K562 (cell line): ENCODE measurements at regions of chr12 and their contacts with region 1.

Region 1: GRCh38 chr12:111412007-111412829 is 6.5 kb downstream of the SH2B3 start:
- DNase-seq: peak in 1 of 4 experiments; percentile 42
- ATAC-seq: no peak; the same call in 2 of the 3 replicates
- H3K4me3 ChIP-seq: no peak overlapping the region
- H3K27ac ChIP-seq: peak overlapping the region; percentile 92
- H3K4me1 ChIP-seq: peaks cover 64 to 65% of the 10 kb centered on the region in 2 experiments
- H3K27me3 ChIP-seq: no peaks in the 10 kb centered on the region
- CTCF ChIP-seq: no peak
- EP300 ChIP-seq: no peak
- POLR2A ChIP-seq: no peak
- RAD21 ChIP-seq: no peak

Region 2: DNA sequence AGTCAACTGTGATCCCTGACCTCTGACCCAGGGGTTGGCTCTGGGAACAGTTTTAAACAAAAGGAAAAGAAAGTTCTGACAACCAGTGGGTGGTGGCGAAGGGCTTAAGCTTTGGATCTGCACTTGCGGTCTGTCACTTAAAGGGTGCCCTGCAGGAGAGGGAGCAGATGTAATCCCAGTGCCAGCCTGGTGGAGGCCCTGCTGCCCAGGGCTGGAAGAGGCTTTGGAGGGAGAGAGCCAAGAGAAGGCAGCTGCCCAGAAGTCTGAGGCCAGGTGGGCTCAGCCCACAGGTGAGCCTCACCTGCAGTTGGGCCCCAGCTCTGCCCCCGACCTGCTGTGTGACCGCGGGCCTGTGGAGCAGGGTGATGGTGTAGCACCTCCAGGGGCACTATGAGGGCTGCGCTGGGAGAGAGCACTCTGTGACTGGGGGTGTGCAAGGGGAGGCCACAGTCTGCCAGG is 12.6 kb after region 1 on chr12:
- CTCF ChIA-PET with region 1: no interaction called
- POLR2A ChIA-PET with region 1: interaction called, 24 read pairs
- in situ Hi-C with region 1: no loop called
- intact Hi-C with region 1: no loop called
- DNase-seq: no peak
- ATAC-seq: peak; percentile 9; the same call in 2 of the 3 replicates
- H3K4me3 ChIP-seq: no peak overlapping the region
- H3K27ac ChIP-seq: no peak overlapping the region
- H3K4me1 ChIP-seq: peaks cover 6 to 32% of the 10 kb centered on the region in 2 experiments; a peak in 4 of 5 replicates
- H3K27me3 ChIP-seq: no peaks in the 10 kb centered on the region
- CTCF ChIP-seq: 0 out of 6 replicates have a peak, but pooled peaks of 1 of the 3 experiments have one; percentile 19
- EP300 ChIP-seq: no peak
- POLR2A ChIP-seq: no peak
- RAD21 ChIP-seq: no peak

Region 3: DNA sequence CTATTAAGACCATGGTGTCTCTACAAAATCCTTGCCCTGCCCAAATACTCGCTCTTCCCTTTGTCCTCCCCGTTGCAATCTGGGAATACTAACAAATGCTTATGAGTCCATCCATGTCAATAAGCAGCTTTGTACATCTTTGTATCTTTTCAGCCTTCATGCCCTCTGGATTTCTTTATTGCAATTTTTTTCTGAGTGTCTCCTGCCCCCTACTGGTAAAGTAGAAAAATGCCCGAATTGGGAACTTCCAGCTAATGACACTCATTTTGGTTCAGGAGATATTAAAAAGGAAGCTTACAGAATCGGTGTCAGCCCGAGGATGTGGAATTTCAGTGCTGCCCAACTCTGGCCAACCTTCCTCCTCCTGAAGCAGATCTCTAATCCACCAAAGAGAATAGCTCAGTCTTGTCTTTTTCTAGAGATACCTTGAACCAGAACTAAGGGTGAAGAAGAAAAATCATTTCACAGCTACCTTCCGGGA is 39.5 kb after region 1 on chr12:
- CTCF ChIA-PET with region 1: no interaction called
- POLR2A ChIA-PET with region 1: interaction called, 13 read pairs
- in situ Hi-C with region 1: no loop called
- intact Hi-C with region 1: no loop called
- DNase-seq: peak in 3 of 4 experiments; percentile 36 to 63 (median 46)
- ATAC-seq: peak; percentile 32
- H3K4me3 ChIP-seq: no peak overlapping the region
- H3K27ac ChIP-seq: no peak overlapping the region
- H3K4me1 ChIP-seq: peaks cover 0 to 10% of the 10 kb centered on the region in 2 experiments; a peak in 2 of 5 replicates
- H3K27me3 ChIP-seq: no peaks in the 10 kb centered on the region
- CTCF ChIP-seq: peak; percentile 70 to 88 (median 80); a peak in 5 of 6 replicates
- EP300 ChIP-seq: no peak
- POLR2A ChIP-seq: peak; percentile 12
- RAD21 ChIP-seq: peak; percentile 77 to 80

Region 4: GRCh38 chr12:111584959-111585358 is 172.7 kb after region 1 on chr12:
- CTCF ChIA-PET with region 1: no interaction called
- POLR2A ChIA-PET with region 1: no interaction called
- in situ Hi-C with region 1: no loop called
- intact Hi-C with region 1: no loop called
- DNase-seq: no peak
- ATAC-seq: no peak
- H3K4me3 ChIP-seq: no peak overlapping the region
- H3K27ac ChIP-seq: no peak overlapping the region
- H3K4me1 ChIP-seq: peaks cover 11 to 28% of the 10 kb centered on the region in 2 experiments; a peak in 3 of 5 replicates
- H3K27me3 ChIP-seq: no peaks in the 10 kb centered on the region
- CTCF ChIP-seq: no peak
- EP300 ChIP-seq: no peak
- POLR2A ChIP-seq: no peak
- RAD21 ChIP-seq: no peak